ENCODE measurements at regions of chr16 and their contacts with region 1.

Region 1: GRCh38 chr16:11255737-11256660 is at the start of gene SOCS1:
- DNase-seq: peak; percentile 80
- H3K4me3 Mint-ChIP-seq: peak within 1 kb of the TSS; percentile 97
- H3K27ac Mint-ChIP-seq: peak within 1 kb of the TSS; percentile 98
- H3K4me1 Mint-ChIP-seq: peaks cover 8% of the 10 kb centered on the region
- H3K27me3 Mint-ChIP-seq: no peaks in the 10 kb centered on the region
- CTCF ChIP-seq: peak; percentile 95
- total RNA-seq, gene SOCS1: 1.4 and 1.6 TPM in 2 replicates

Region 2: GRCh38 chr16:10949370-10949970 is 306.5 kb before region 1 on chr16:
- CTCF ChIA-PET with region 1: interaction called, 27 read pairs
- POLR2A ChIA-PET with region 1: interaction called, 4 read pairs
- intact Hi-C with region 1: no loop called
- DNase-seq: peak; percentile 65
- H3K4me3 Mint-ChIP-seq: no peak overlapping the region
- H3K27ac Mint-ChIP-seq: peak overlapping the region; percentile 75
- H3K4me1 Mint-ChIP-seq: peaks cover 45% of the 10 kb centered on the region
- H3K27me3 Mint-ChIP-seq: no peaks in the 10 kb centered on the region
- CTCF ChIP-seq: no peak

Region 3: GRCh38 chr16:10964039-10964890 is 291.7 kb before region 1 on chr16:
- CTCF ChIA-PET with region 1: interaction called, 342 read pairs
- POLR2A ChIA-PET with region 1: interaction called, 26 read pairs
- intact Hi-C with region 1: no loop called
- DNase-seq: peak; percentile 79
- H3K4me3 Mint-ChIP-seq: no peak overlapping the region
- H3K27ac Mint-ChIP-seq: no peak overlapping the region
- H3K4me1 Mint-ChIP-seq: peaks cover 18% of the 10 kb centered on the region
- H3K27me3 Mint-ChIP-seq: no peaks in the 10 kb centered on the region
- CTCF ChIP-seq: peak; percentile 93

Region 4: DNA sequence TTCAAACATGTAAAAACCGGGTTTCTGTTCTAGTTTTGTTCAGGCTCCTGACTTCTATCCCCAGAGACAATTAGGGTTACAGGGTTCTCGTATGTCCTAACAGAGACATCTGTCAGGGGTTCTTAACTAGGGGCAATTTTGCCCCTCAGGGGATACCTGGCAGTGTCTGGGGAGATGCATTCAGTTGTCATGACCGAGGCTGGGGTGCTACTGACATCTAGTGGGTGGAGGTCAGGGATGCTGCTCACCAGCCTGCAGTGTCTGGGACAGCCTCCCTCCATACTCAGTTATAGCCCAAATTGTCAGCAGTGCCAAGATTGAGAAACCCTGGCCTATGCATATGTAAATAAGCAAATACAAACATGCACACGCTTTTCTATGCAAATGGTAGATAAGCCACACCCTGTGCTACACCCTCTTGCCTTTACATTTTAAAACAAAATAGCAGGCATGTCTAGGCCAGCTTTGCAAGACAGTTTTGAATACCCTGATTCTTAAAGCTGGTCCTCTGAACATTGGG is 274.2 kb before region 1 on chr16:
- CTCF ChIA-PET with region 1: interaction called, 342 read pairs
- POLR2A ChIA-PET with region 1: interaction called, 4 read pairs
- intact Hi-C with region 1: no loop called
- DNase-seq: peak; percentile 29
- H3K4me3 Mint-ChIP-seq: no peak overlapping the region
- H3K27ac Mint-ChIP-seq: no peak overlapping the region
- H3K4me1 Mint-ChIP-seq: no peaks in the 10 kb centered on the region
- H3K27me3 Mint-ChIP-seq: no peaks in the 10 kb centered on the region
- CTCF ChIP-seq: peak; percentile 12

Region 5: DNA sequence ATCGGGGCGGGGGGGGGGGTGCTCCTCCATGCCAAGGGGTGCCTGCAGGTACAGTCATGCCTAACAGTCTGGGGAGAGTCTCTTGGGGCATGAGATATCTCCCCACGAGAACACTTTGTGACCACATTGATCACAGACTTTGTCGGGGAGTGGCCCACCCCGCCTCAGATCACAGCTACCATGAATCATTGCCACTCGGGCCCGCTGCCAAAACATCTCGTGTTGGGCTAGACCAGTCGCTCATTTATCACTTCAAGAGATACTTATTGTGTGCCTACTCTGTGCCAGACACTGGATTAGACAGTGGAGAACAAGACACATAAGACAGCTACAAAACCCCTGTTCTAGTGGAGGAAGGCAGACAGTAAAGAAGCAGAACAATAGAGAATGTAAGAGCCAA is 239.0 kb before region 1 on chr16:
- CTCF ChIA-PET with region 1: interaction called, 3 read pairs
- POLR2A ChIA-PET with region 1: interaction called, 12 read pairs
- intact Hi-C with region 1: no loop called
- DNase-seq: peak; percentile 88
- H3K4me3 Mint-ChIP-seq: peak overlapping the region; percentile 42
- H3K27ac Mint-ChIP-seq: peak overlapping the region; percentile 92
- H3K4me1 Mint-ChIP-seq: peaks cover 33% of the 10 kb centered on the region
- H3K27me3 Mint-ChIP-seq: no peaks in the 10 kb centered on the region
- CTCF ChIP-seq: no peak

Region 6: DNA sequence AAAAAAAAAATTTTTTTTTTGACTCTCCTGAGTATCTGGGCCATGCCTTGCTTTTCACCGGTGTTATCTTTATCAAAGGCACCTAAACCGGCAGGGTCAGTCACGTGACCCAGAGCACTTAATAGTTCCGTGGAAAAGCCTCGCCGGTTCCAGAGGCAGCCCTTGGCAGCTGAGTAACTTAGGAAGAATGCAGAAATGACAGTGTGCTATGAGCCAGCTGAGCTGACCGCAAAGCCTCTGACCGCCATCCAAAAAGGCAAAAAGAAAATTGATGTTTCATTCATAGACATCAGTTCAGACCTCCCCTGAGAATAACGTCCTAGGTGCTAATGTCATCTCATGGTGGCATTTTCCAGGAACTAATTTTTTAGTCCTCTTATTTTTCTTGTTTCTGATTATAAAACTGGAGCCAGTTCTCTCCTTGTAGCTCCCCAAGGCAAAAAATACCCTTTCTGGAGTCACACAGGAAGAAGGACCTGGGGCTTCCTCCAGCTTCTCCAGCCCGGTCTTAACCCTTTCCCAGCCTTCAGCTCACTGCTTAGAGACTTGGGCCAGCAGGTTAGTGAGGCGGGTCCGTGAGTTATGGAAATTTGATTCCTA is 122.6 kb before region 1 on chr16:
- CTCF ChIA-PET with region 1: interaction called, 23 read pairs
- POLR2A ChIA-PET with region 1: interaction called, 11 read pairs
- intact Hi-C with region 1: loop called (anchors 10 kb)
- DNase-seq: peak; percentile 88
- H3K4me3 Mint-ChIP-seq: peak overlapping the region; percentile 21
- H3K27ac Mint-ChIP-seq: peak overlapping the region; percentile 61
- H3K4me1 Mint-ChIP-seq: peaks cover 53% of the 10 kb centered on the region
- H3K27me3 Mint-ChIP-seq: no peaks in the 10 kb centered on the region
- CTCF ChIP-seq: no peak

Region 7: DNA sequence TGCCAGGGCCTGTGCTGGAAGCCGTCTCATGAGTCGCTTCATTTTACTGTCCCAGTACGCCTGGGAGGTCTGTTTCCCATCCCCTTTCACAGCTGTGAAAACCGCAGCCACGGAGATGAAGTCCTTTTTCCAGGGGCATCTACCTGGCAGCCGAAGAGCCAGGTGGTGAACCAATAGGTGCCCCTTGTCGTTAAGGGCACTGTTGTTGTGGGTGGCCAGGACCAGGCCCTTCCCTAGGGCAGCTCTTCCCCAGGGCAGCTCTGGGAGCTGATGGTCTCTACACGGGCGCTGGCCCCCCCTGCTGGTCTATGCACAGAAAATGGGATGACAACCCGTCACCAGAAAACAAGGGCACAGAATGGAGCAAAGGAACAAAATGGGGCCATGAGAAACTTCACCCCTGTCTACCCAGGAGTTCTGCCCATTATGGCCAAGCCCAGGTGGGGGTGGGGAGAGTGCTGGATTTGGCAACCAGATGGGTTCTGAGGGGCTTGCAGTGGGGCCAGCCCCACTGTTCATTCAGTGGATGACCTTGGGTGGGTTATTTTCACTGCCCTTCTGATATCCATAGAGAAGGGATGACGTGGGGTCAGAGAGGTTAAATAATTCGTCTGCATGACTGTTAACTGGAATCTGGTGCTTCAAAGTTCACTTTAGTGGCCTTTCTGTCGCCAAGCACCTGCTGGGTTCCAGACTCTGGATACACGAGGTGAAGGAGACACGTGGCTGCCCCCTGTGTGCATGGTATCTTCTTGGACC is 100.8 kb after region 1 on chr16:
- CTCF ChIA-PET with region 1: interaction called, 7 read pairs
- POLR2A ChIA-PET with region 1: interaction called, 3 read pairs
- intact Hi-C with region 1: loop called (anchors 2 kb)
- DNase-seq: peak; percentile 67
- H3K4me3 Mint-ChIP-seq: no peak overlapping the region
- H3K27ac Mint-ChIP-seq: peak overlapping the region; percentile 44
- H3K4me1 Mint-ChIP-seq: peaks cover 20% of the 10 kb centered on the region
- H3K27me3 Mint-ChIP-seq: no peaks in the 10 kb centered on the region
- CTCF ChIP-seq: peak; percentile 14